CD8-positive, alpha-beta T cell (primary cell): ENCODE measurements at regions of chr4 and their contacts with region 1.

Region 1: GRCh38 chr4:80153874-80154544 is 43.3 kb upstream of the PRDM8 start:
- DNase-seq: no peak
- ATAC-seq: no peak
- H3K4me3 ChIP-seq: no peak overlapping the region
- H3K4me3 Mint-ChIP-seq: no peak overlapping the region
- H3K27ac ChIP-seq: no peak overlapping the region
- H3K27ac Mint-ChIP-seq: no peak overlapping the region
- H3K4me1 ChIP-seq: no peaks in the 10 kb centered on the region
- H3K4me1 Mint-ChIP-seq: no peaks in the 10 kb centered on the region
- H3K27me3 ChIP-seq: no peaks in the 10 kb centered on the region
- H3K27me3 Mint-ChIP-seq: no peaks in the 10 kb centered on the region
- CTCF ChIP-seq: no peak

Region 2: DNA sequence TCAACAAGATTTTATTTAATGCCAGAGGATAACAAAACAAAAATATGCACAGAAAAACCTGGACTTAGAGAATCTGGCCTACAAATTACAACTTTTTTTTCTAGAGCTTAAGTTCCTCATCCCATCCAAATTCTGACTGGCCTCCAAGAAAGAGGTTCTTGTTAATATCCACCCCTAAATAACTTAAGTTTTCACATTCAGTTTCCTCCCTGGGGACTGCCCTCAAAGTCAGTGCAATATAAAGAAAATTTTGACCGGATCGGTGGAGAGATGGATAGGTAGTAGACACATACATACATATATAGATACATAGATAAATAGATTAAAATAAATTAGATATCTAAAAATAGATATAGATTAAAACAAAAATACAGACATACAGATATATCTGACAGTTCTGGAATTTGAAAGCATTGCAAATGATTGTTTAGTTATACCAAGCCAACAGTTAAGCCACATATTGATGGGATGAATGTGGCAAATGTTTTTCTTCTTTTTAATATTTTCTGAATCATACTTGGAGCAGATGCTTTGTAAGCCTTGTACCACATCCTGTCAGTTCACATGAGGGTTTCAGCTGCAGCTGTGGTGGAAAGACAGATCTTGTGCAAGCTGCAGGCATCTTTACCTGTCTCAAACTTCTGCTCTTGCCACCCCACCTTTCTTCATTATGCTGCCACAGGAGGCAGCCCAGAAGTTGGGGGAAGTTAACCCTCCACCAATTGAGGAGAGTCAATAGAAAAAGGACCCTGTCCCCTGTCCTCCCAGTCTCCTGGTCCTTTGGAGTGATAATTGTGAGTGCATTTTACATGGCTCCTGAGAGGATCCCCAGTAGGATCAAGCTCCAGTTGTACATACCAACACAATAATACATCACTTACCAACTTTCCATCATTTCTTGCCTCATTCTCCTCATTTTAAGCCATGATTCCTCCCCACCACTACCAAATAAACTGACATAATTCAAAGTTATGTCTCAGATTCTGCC is 15.2 kb before region 1 on chr4:
- CTCF ChIA-PET with region 1: interaction called, 3 read pairs
- POLR2A ChIA-PET with region 1: no interaction called
- intact Hi-C with region 1: loop called in 1 of 2 experiments (anchors 2 kb)
- DNase-seq: peak in 8 of 9 experiments; percentile 36 to 74 (median 62)
- ATAC-seq: peak; percentile 95
- H3K4me3 ChIP-seq: no peak overlapping the region
- H3K4me3 Mint-ChIP-seq: no peak overlapping the region
- H3K27ac ChIP-seq: peak overlapping the region in 1 of 2 experiments; percentile 21
- H3K27ac Mint-ChIP-seq: peak overlapping the region; percentile 70
- H3K4me1 ChIP-seq: peaks cover 20% of the 10 kb centered on the region
- H3K4me1 Mint-ChIP-seq: peaks cover 46% of the 10 kb centered on the region
- H3K27me3 ChIP-seq: no peaks in the 10 kb centered on the region
- H3K27me3 Mint-ChIP-seq: no peaks in the 10 kb centered on the region
- CTCF ChIP-seq: no peak